Activated CD4-positive, alpha-beta T cell treated with anti-CD3 and anti-CD28 coated beads, Interleukin-2, amount 10 ng/mL, durations not matched to agents 7 days and 5 days (primary cell): ENCODE measurements at regions of chr15 and their contacts with region 1.

Region 1: DNA sequence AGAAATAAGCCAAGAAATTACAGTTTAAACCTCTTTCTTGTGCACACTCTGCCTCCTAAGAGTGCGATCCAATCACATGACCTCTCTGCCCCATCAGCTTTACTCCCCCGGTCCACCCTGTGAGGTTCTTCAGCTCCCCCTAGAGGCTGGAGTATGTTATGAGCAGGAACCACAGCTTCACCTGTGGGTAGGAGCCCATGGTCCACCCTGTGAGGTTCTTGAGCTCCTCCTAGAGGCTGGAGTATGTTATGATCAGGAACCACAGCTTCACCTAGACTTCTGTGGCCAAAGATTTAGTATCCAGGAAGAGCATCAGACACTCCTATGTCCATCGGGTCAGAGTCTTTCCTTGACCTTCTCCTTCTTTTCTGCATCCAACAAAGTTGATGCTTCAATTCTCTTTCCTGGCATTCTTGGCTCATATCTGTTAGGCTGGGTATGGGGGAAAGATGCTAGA is 163.9 kb downstream of the MINAR1 start:
- DNase-seq: peak; percentile 76
- H3K4me3 Mint-ChIP-seq: no peak overlapping the region
- H3K27ac Mint-ChIP-seq: no peak overlapping the region
- H3K4me1 Mint-ChIP-seq: peaks cover 4% of the 10 kb centered on the region
- H3K27me3 Mint-ChIP-seq: peaks cover 3% of the 10 kb centered on the region

Region 2: DNA sequence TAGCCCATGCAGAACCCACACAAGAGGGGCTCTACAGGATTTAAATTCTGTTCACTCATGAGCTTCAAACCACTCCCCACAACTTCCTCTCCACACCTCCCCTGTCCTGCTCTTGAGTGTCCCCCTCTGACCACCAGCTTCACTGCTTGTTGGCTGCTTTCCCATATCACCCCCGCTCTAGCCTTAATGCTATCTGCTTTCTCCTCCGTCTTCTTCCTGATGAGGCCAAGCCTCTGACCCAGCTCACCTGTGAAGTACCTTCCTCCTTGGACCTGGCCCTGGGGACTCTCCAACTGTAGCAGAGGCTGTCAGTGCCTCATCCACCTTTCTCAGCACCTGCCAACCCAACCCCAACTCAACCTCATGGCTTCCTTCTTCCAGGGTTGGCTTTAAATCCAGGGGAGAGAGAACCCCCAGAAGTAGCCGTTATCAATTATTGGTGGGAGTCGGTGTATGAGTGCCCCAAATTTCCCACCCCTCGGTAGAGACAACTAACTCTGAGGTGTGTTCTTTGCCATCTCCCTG is 10.8 kb after region 1 on chr15:
- CTCF ChIA-PET with region 1: interaction called, 10 read pairs
- POLR2A ChIA-PET with region 1: no interaction called
- DNase-seq: no peak
- H3K4me3 Mint-ChIP-seq: no peak overlapping the region
- H3K27ac Mint-ChIP-seq: no peak overlapping the region
- H3K4me1 Mint-ChIP-seq: no peaks in the 10 kb centered on the region
- H3K27me3 Mint-ChIP-seq: peaks cover 2% of the 10 kb centered on the region